ENCODE measurements at regions of chr13 and their contacts with region 1.

Region 1: DNA sequence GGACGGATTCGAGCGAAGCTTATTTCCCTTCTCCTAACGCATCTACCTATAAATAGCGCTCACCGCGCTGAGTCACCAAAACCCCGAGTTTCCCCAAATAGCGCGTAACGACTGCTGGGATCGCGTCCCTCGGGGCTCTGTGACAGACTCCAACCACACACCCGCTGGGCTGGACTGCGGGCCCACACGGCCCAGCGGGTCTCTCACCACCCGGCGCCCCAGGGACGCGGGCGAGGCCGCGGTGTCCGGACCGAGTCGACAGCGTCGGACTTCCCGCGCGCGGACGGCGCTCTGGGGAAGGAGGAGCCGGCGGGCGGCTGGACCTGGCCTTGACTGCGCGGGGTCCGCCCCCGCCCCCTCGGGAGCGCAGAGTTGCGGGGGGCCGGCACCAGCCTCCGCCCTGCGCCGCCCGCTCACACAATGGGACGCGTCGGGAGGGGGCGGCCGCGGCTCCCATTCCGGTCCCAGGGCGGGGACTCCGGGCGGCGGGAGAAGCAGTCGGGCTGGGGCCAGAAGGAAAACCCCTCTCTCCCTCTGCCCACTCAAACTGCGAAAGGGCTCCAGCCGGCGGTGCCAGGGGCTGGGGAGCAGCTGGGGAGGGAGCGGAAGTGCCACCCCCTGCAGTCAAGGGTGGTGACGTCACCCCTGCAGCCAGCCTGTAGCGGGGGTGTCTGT is 108.8 kb downstream of the KCNRG start:
- DNase-seq: peak; percentile 78
- H3K4me3 Mint-ChIP-seq: peak overlapping the region; percentile 84
- H3K27ac Mint-ChIP-seq: peak overlapping the region; percentile 87
- H3K4me1 Mint-ChIP-seq: peaks cover 48% of the 10 kb centered on the region
- H3K27me3 Mint-ChIP-seq: peaks cover 19% of the 10 kb centered on the region

Region 2: DNA sequence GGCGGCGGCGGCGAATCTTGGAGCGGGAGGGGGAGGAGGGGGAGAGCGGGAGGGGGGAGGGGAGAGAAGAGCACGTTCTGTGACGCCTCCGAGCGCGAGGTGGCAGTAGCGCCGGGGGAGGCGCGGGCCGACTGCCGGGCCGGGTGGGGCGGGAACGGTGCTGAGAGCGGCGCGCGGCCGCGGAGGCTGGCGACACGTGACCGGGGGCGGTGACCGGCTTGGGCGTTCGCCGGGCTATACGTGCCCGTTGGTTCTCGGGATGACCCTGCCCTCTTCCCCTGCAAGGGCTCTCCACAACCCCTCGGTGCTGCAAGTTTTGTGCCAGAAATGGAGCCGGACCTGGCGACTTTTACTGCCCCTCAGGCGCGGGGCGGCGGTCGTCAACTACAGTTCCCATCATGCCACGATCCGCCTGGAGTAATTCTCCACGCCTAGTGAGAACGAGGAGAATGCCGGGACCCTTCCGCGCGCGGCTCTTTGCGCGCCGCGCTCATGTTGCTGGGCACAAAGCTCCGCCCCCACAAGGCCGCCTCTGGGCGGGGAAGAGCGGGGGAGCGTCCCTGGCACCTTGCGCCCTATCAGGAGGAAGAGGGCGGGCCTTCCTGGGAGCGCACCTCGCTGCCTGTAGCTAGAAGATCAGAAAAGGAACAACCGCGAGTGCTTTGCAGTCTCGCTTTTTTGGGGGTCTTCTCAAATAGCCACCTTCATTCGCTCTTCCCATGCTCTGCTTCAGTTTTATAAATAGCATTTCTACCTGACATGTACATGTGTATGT is 331.3 kb before region 1 on chr13 and contains the start of gene KPNA3:
- CTCF ChIA-PET with region 1: no interaction called
- POLR2A ChIA-PET with region 1: interaction called, 18 read pairs
- DNase-seq: peak; percentile 96
- H3K4me3 Mint-ChIP-seq: peak within 1 kb of the TSS; percentile 95
- H3K27ac Mint-ChIP-seq: peak within 1 kb of the TSS; percentile 97
- H3K4me1 Mint-ChIP-seq: peaks cover 32% of the 10 kb centered on the region
- H3K27me3 Mint-ChIP-seq: peaks cover 4% of the 10 kb centered on the region
- total RNA-seq, gene KPNA3: 34.9 to 36.1 TPM

Region 3: GRCh38 chr13:49996951-49997895 is 126.8 kb before region 1 on chr13 and contains the start of gene TRIM13:
- CTCF ChIA-PET with region 1: interaction called, 19 read pairs
- POLR2A ChIA-PET with region 1: interaction called, 82 read pairs
- DNase-seq: peak; percentile 86
- H3K4me3 Mint-ChIP-seq: peak within 1 kb of the TSS; percentile 75
- H3K27ac Mint-ChIP-seq: peak within 1 kb of the TSS; percentile 85
- H3K4me1 Mint-ChIP-seq: peaks cover 37% of the 10 kb centered on the region
- H3K27me3 Mint-ChIP-seq: no peaks in the 10 kb centered on the region
- total RNA-seq, gene TRIM13: 13.2 to 17.4 TPM

Region 4: GRCh38 chr13:50038266-50038665 is 85.7 kb before region 1 on chr13:
- CTCF ChIA-PET with region 1: no interaction called
- POLR2A ChIA-PET with region 1: no interaction called
- DNase-seq: no peak
- H3K4me3 Mint-ChIP-seq: no peak overlapping the region
- H3K27ac Mint-ChIP-seq: no peak overlapping the region
- H3K4me1 Mint-ChIP-seq: no peaks in the 10 kb centered on the region
- H3K27me3 Mint-ChIP-seq: no peaks in the 10 kb centered on the region

Region 5: DNA sequence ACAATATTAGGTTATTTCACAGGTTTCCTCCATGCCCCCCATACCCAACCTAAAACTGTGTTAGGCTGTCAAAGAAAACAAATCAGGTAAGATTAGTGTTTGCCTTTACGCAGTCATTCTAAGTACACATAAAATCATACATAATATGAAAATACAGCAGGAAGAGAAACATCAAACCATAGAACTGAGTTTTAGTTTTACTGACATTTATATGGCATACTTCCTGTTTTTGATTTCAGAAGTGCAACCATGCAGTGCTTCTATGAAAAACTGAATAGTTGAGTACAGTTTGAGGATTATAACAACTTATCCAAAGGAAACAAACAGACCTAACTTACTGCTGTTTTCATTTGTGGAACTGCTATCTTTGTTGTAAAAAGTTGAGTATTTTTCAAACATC is 17.4 kb before region 1 on chr13:
- CTCF ChIA-PET with region 1: interaction called, 5 read pairs
- POLR2A ChIA-PET with region 1: interaction called, 36 read pairs
- DNase-seq: no peak
- H3K4me3 Mint-ChIP-seq: no peak overlapping the region
- H3K27ac Mint-ChIP-seq: peak overlapping the region; percentile 40
- H3K4me1 Mint-ChIP-seq: peaks cover 13% of the 10 kb centered on the region
- H3K27me3 Mint-ChIP-seq: no peaks in the 10 kb centered on the region

Region 6: GRCh38 chr13:50208826-50209335 is 84.9 kb after region 1 on chr13:
- CTCF ChIA-PET with region 1: no interaction called
- POLR2A ChIA-PET with region 1: no interaction called
- DNase-seq: no peak
- H3K4me3 Mint-ChIP-seq: no peak overlapping the region
- H3K27ac Mint-ChIP-seq: no peak overlapping the region
- H3K4me1 Mint-ChIP-seq: no peaks in the 10 kb centered on the region
- H3K27me3 Mint-ChIP-seq: peaks cover 18% of the 10 kb centered on the region

Region 7: DNA sequence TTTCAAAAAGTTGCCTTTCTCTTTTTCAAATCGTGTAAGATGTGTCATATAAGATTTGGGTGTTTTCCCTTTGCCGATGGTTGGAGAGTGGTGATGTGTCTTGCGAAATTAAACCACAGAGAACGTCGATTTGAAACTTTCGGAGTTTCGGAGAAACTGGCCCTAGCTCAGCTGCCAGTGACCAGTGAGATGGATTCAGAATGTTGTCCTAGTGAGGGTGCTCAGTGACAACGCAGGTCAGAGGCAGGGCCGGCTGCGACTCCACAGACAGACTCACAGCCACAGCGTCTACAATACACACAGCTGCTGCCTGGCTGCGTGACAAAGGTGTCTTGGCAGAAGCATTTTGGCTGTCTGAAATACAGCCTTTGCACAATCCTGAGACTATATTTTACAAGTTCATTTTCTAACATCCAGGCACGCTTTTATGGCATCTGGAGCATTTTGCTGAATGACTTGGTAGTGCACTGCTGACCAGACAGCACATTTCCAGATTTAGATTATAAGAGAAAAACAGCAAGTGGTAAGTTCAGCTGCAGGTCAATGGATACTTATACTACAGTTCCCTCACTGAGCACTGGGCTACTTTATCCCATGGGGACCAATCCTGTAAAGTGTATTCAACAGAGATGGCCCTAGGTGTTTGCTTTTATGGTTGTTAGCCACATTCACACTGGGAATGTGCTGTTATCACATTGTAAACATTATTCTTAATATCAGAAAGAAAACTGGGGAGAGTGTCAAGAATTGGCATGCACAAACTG is 98.8 kb after region 1 on chr13:
- CTCF ChIA-PET with region 1: no interaction called
- POLR2A ChIA-PET with region 1: interaction called, 23 read pairs
- DNase-seq: peak; percentile 19
- H3K4me3 Mint-ChIP-seq: peak overlapping the region; percentile 25
- H3K27ac Mint-ChIP-seq: no peak overlapping the region
- H3K4me1 Mint-ChIP-seq: peaks cover 54% of the 10 kb centered on the region
- H3K27me3 Mint-ChIP-seq: peaks cover 73% of the 10 kb centered on the region

Region 8: GRCh38 chr13:50244713-50245574 is 120.9 kb after region 1 on chr13:
- CTCF ChIA-PET with region 1: no interaction called
- POLR2A ChIA-PET with region 1: interaction called, 11 read pairs
- DNase-seq: peak; percentile 61
- H3K4me3 Mint-ChIP-seq: no peak overlapping the region
- H3K27ac Mint-ChIP-seq: peak overlapping the region; percentile 36
- H3K4me1 Mint-ChIP-seq: peaks cover 34% of the 10 kb centered on the region
- H3K27me3 Mint-ChIP-seq: peaks cover 55% of the 10 kb centered on the region

Region 9: DNA sequence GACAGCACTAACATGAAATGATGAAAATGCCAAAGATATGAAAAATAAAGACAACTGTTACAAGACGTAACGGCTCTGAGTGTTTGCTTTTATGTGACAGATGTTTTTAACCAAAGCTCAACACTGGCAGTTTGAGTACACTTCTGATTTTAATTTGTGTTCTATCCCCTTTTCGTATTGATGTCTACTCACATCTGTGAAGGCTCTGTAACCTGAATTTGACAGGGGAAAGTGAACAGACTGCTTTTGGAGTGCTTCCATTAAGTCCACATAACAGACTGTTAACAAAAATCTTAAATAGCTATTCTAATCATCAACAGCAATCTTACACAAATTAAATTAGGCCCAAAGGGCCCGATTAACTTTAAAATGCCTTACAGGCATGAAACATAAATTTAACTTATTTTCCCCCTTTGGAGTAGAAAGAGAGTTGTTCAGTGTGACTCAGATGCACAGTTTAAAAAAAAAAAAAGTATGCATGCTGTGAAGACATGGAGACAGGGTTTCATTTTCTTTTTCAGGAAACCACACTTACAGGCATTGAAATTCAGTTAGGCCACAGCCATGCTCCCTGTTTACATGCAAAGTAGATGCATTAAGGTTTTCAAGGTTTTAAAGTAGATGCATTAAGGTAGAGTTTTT is 769.3 kb after region 1 on chr13:
- CTCF ChIA-PET with region 1: no interaction called
- POLR2A ChIA-PET with region 1: interaction called, 46 read pairs
- DNase-seq: peak; percentile 45
- H3K4me3 Mint-ChIP-seq: peak overlapping the region; percentile 69
- H3K27ac Mint-ChIP-seq: peak overlapping the region; percentile 96
- H3K4me1 Mint-ChIP-seq: peaks cover 47% of the 10 kb centered on the region
- H3K27me3 Mint-ChIP-seq: peaks cover 2% of the 10 kb centered on the region

Measured in activated CD4-positive, alpha-beta memory T cell treated with anti-CD3 and anti-CD28 coated beads, Interleukin-2, amount 10 ng/mL, durations not matched to agents 7 days and 5 days (primary cell).